ENCODE measurements at regions of chr7 and their contacts with region 1.

Region 1: DNA sequence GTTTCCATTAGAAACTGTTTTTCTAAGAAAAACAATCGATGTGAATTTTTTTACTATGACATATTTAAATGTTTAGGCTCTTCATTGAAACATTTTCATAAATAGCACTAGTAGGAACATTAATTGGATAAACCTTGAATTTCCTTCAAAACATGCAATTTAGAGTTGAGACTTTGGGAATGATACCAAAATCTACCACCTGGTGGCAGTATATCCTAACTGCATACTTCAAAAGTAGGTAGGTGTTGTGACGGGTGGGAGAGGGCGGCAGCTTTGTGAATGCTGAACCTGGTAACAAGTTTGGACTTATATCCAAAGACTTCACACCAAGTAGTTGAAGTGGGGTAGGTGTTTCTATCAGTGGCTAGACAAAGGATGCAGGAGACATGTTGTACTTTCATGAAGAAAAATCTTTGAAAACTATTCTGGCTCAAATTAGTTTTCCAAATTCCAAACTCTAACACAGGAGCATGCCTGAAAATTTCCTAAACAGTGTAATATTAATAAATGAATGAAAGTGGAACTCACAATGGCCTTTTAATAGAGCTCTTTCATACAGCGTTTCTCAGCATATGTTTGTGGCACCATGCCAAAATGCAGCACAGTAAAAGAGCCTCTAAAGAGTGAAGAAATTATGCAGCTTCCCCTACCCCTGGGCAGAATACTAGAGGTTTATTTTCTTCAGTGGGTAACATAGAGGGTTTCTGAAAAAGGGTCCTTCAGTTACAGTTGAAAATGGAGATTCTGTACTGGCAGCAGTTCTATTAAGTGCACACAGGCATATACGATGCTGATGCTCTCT is 201.0 kb upstream of the TPK1 start:
- DNase-seq: peak in 5 of 7 donors; percentile 13 to 46 (median 31)
- H3K4me3 ChIP-seq: no peak overlapping the region
- H3K27ac ChIP-seq: no peak overlapping the region
- H3K4me1 ChIP-seq: peaks cover 0 to 4% of the 10 kb centered on the region in 2 donors
- H3K27me3 ChIP-seq: no peaks in the 10 kb centered on the region
- CTCF ChIP-seq: peak; percentile 55 to 83 (median 72)
- POLR2A ChIP-seq: no peak

Region 2: GRCh38 chr7:145350334-145350733 is 313.5 kb after region 1 on chr7:
- intact Hi-C with region 1: no loop called
- DNase-seq: no peak
- H3K4me3 ChIP-seq: no peak overlapping the region
- H3K27ac ChIP-seq: no peak overlapping the region
- H3K4me1 ChIP-seq: no peaks in the 10 kb centered on the region
- H3K27me3 ChIP-seq: no peaks in the 10 kb centered on the region
- CTCF ChIP-seq: no peak
- POLR2A ChIP-seq: no peak

Region 3: DNA sequence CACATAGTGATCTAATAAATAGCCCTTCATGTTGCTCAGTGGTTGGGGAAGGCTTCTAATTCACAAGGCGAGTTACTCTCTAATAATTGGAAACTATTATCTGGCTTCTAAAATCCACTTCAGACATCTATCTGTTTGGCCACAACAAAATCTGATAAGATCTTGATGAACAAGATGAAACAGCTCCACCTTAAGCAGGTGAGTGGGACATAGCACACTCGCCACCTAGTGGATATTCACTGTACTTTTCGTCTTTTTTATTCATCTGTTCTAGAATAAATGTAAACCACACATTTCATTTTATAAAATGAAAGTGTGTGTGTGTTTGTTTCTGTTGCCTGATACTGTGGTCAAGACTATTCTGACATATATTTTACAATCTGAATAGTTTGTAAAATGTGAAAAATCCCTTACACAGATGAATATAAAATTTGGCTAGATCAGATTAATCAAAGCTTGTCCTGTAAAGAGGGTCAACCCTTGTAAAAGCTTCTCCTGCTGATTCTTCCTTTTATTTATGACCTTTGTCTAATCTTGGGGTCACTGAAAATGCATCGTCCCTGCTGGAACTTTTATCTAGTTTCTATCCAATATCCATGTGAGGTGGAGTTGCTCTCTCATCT is 1053.3 kb after region 1 on chr7:
- intact Hi-C with region 1: loop called in 1 of 2 experiments (anchors 5 kb)
- DNase-seq: peak in 1 of 7 donors; percentile 1
- H3K4me3 ChIP-seq: no peak overlapping the region
- H3K27ac ChIP-seq: no peak overlapping the region
- H3K4me1 ChIP-seq: no peaks in the 10 kb centered on the region
- H3K27me3 ChIP-seq: no peaks in the 10 kb centered on the region
- CTCF ChIP-seq: peak; percentile 49 to 64 (median 56)
- POLR2A ChIP-seq: no peak

Measured in adrenal gland (tissue), 19 donors.